PC-3 (cell line): ENCODE measurements at regions of chr5 and their contacts with region 1.

Region 1: GRCh38 chr5:141508798-141509611 is 20.1 kb downstream of the PCDHGC5 start:
- DNase-seq: peak; percentile 79
- ATAC-seq: peak; percentile 88
- H3K4me3 ChIP-seq: peak overlapping the region; percentile 57; the same call in 1 of the 2 replicates
- H3K27ac ChIP-seq: peak overlapping the region; percentile 76
- H3K4me1 ChIP-seq: peaks cover 13% of the 10 kb centered on the region; the same call in 1 of the 2 replicates
- H3K27me3 ChIP-seq: no peaks in the 10 kb centered on the region
- CTCF ChIP-seq: no peak

Region 2: DNA sequence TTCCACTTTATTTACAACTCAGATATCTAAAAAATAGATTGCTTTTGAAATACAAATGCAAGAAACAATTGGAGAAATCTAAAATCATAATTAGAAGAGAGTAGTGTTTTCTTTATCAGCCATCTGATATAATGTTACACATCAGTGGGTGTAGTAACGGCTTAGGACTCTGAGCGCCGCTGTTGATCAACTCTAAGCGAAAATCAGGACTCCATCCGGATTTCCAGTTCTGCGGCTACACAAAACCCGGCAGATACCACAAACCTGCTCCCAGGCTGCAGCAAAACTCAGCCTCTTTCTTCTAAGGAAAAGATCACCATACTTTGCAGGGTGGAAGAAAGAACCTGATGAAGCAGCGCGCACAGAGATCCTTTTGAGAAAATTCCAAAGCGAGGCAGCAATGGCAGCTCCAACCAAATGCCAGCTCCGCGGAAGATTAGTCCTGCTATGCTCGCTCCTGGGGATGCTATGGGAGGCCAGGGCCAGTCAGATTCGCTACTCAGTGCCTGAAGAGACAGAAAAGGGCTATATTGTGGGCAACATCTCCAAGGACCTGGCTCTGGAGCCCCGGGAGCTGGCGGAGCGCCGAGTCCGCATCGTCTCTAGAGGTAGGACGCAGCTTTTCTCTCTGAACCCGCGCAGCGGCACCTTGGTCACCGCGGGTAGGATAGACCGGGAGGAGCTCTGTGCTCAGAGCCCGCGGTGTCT is 106.3 kb before region 1 on chr5 and contains the start of gene PCDHGA9:
- CTCF ChIA-PET with region 1: no interaction called
- POLR2A ChIA-PET with region 1: no interaction called
- intact Hi-C with region 1: loop called (anchors 5 kb)
- DNase-seq: no peak
- ATAC-seq: no peak
- H3K4me3 ChIP-seq: no peak within 1 kb of the TSS
- H3K27ac ChIP-seq: no peak within 1 kb of the TSS
- H3K4me1 ChIP-seq: no peaks in the 10 kb centered on the region
- H3K27me3 ChIP-seq: no peaks in the 10 kb centered on the region
- CTCF ChIP-seq: no peak
- total RNA-seq, gene PCDHGA9: 1.9 and 2.9 TPM in 2 replicates